ENCODE measurements at regions of chr2 and their contacts with region 1.

Region 1: DNA sequence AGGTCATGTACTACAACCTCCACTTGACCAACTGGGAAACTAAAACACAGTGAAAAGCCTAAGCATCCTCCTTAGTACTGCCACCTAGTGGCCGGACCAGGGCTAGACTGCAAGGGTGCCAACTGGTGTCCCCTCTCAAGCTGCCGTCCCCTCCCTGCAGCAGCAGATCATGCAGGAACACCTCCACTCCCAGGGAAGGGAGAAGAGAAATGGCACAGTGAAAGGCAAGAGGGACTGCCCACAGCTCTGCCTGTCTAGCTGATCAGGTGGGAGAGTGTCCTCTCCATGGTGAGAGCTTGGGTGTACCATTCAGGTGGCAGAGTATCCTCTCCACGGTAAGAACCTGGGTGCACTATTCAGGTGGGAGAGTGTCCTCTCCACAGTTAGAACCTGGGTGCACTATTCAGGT is 78.1 kb downstream of the AAK1 start:
- DNase-seq: no peak
- H3K4me3 ChIP-seq: no peak overlapping the region
- H3K27ac ChIP-seq: no peak overlapping the region
- H3K4me1 ChIP-seq: peaks cover 32% of the 10 kb centered on the region
- H3K27me3 ChIP-seq: no peaks in the 10 kb centered on the region
- CTCF ChIP-seq: peak in 2 of 3 experiments; percentile 33 to 36
- POLR2A ChIP-seq: no peak

Region 2: DNA sequence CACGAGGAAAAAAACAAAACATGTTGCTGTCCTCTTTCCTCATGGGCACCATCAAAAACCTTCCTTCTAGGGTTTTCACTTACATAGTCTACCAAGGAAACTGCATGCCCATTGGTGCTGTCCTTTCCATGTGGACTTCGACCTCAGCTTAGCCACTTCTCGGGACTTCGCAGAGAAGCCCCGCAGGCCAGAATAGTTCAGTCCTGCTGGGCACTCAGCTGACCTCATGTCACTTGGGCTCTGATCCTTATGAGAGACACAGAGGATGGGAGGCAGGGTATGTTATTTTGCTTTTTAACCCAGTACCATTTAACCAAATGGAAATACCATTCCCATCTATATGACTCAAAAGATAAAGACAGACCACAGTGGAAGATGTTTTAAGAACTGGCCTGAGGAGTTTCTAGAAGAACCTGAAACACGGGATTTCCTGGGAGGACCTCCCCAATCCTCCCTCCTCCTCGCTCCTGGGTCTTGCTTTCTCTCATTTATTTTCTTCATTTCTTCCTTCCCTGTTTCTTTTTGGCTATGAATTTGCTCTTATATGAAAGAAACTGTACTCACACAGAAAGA is 49.7 kb after region 1 on chr2:
- intact Hi-C with region 1: no loop called
- DNase-seq: no peak
- H3K4me3 ChIP-seq: no peak overlapping the region
- H3K27ac ChIP-seq: no peak overlapping the region
- H3K4me1 ChIP-seq: peaks cover 51% of the 10 kb centered on the region
- H3K27me3 ChIP-seq: no peaks in the 10 kb centered on the region
- CTCF ChIP-seq: no peak
- POLR2A ChIP-seq: no peak

Region 3: GRCh38 chr2:69717861-69718273 is 152.4 kb after region 1 on chr2:
- intact Hi-C with region 1: loop called (anchors 10 kb)
- DNase-seq: no peak
- H3K4me3 ChIP-seq: no peak overlapping the region
- H3K27ac ChIP-seq: no peak overlapping the region
- H3K4me1 ChIP-seq: no peaks in the 10 kb centered on the region
- H3K27me3 ChIP-seq: no peaks in the 10 kb centered on the region
- CTCF ChIP-seq: no peak
- POLR2A ChIP-seq: no peak

Measured in vagina (tissue), 2 donors.